Transverse colon (tissue), 4 donors: ENCODE measurements at regions of chr1 and their contacts with region 1.

Region 1: DNA sequence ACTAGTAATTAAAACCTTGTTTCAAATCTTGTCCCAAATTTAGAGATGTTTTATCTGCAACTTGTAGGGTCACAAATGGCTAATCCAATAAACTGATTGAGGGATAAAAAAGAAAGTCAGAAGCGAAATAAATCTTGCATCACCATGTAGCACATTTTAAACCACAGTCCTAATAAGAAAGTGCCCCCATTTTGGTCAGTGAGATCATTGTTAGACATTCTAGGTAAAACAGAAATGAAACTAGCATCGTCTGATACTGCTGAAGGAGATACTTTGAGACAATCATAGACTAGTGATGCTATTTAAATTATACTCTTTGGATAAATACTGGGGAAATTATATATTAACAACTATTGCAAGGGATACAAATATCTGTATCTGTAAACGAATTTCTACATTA is 247.9 kb downstream of the AMY1C start:
- DNase-seq: no peak
- H3K4me3 ChIP-seq: no peak overlapping the region
- H3K27ac ChIP-seq: no peak overlapping the region
- H3K4me1 ChIP-seq: no peaks in the 10 kb centered on the region
- H3K27me3 ChIP-seq: no peaks in the 10 kb centered on the region
- CTCF ChIP-seq: no peak
- EP300 ChIP-seq: no peak
- POLR2A ChIP-seq: no peak

Region 2: DNA sequence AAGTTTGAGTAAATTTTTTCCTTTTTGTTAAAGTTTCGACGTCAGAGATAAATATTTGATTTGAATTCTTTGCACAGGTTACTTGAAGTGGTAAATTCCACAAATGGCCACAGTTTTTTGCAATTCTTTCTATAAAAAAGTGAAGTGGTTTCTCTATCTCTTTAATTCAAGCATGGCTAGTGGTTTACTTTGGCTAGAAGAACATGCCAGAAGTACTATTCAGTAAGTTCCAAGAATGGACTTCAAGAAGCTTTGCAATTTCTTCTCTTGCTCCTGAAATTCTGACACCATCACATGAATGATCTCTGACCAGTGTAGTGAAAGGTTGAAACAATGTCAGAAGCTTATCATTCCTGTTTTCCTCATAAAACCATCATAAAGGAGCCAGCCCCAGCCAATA is 527.8 kb before region 1 on chr1:
- in situ Hi-C with region 1: no loop called
- intact Hi-C with region 1: loop called (anchors 5 kb)
- DNase-seq: no peak
- H3K4me3 ChIP-seq: no peak overlapping the region
- H3K27ac ChIP-seq: no peak overlapping the region
- H3K4me1 ChIP-seq: no peaks in the 10 kb centered on the region
- H3K27me3 ChIP-seq: no peaks in the 10 kb centered on the region
- CTCF ChIP-seq: no peak
- EP300 ChIP-seq: no peak
- POLR2A ChIP-seq: no peak